Activated CD4-positive, alpha-beta memory T cell treated with anti-CD3 and anti-CD28 coated beads for 36 hours (primary cell): ENCODE measurements at regions of chr11 and their contacts with region 1.

Region 1: GRCh38 chr11:10933455-10934292 is 75.8 kb upstream of the ZBED5 start:
- DNase-seq: peak; percentile 89
- H3K4me3 Mint-ChIP-seq: peak overlapping the region; percentile 68
- H3K27ac Mint-ChIP-seq: no peak overlapping the region
- H3K4me1 Mint-ChIP-seq: peaks cover 15% of the 10 kb centered on the region
- H3K27me3 Mint-ChIP-seq: peaks cover 22% of the 10 kb centered on the region

Region 2: DNA sequence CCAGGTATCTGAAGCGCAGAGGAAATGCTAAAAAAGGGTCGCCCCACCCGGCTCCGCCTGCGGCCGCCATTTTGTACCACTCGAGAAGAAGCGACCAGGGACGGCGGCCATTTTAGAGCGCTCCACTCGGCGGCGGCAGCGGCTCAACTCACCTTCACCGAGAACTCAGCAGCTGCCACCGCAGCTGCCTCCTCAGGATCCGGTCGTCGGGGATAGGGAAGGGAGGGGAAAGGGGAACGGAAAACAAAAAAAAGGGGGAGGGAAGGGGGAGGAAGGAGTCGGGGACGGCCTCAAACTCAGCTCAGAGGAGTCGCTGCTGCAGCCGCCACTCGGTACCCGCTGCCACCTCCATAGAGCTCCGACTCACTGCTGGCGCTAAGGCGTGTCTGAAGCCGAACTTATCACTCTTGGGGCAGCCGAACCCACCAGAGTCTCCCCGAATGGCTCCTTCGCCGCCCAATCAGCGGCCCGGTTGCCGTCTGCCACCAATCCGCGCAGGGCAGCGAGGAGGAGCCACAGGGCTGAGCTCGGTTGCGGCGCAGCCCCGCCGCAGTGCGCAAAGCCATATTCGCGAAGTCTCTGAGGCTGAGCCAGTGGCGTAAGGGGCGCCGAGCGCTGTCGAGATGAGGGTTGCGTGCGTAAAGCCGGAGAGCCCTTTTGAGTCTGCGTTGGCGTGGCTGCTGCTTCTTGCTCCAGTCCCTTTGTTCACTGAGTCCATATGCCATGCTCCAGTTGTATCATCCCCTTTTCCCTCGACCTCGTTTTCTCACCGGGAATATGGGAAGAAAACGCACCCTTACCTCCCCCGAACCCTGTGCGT is 124.9 kb before region 1 on chr11 and contains the start of gene EIF4G2:
- CTCF ChIA-PET with region 1: interaction called, 5 read pairs
- POLR2A ChIA-PET with region 1: interaction called, 6 read pairs
- intact Hi-C with region 1: loop called (anchors 5 kb)
- DNase-seq: peak; percentile 99
- H3K4me3 Mint-ChIP-seq: peak within 1 kb of the TSS; percentile 91
- H3K27ac Mint-ChIP-seq: peak within 1 kb of the TSS; percentile 98
- H3K4me1 Mint-ChIP-seq: peaks cover 46% of the 10 kb centered on the region
- H3K27me3 Mint-ChIP-seq: no peaks in the 10 kb centered on the region
- total RNA-seq, gene EIF4G2: 794 to 835 TPM

Region 3: DNA sequence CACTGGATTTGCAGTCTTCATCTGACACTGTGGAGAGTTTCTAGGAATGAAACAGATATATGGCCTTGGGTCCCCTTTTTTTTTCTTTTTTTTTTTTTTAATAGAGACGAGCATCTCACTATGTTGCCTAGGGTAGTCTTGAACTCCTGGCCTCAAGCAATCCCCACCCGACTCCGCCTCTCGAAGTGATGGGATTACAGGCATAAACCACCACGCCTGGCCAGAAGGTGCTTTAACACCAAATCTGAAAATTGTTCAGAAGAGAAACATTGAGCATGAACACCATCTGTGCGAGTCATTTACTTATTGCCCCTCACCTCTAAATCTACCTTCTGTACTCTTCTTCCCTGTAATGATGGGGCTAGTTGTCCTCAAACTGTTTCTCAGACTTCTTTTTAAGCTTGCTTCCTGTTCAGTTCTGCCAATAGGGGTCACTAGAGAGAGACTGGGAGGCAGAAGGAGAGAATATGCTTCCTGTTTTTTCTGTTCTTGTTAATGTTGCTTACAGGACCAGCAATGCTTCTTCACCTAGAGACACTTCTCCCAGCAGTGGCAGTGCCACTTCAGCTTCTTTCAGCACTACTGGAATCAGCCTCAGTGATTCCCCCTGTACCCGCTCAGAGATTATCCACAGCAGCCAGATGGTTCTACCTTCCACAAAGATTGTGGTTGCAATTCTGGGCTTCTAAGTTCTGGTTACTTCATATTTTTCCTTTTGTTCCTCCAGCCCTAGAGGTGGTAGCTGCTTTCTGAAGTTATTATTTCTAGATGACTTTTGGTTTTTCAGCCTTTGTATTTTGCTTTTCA is 55.1 kb before region 1 on chr11:
- CTCF ChIA-PET with region 1: interaction called, 13 read pairs
- POLR2A ChIA-PET with region 1: no interaction called
- intact Hi-C with region 1: no loop called
- DNase-seq: no peak
- H3K4me3 Mint-ChIP-seq: no peak overlapping the region
- H3K27ac Mint-ChIP-seq: no peak overlapping the region
- H3K4me1 Mint-ChIP-seq: peaks cover 11% of the 10 kb centered on the region
- H3K27me3 Mint-ChIP-seq: no peaks in the 10 kb centered on the region

Region 4: GRCh38 chr11:11022125-11022730 is 88.6 kb after region 1 on chr11:
- CTCF ChIA-PET with region 1: interaction called, 49 read pairs
- POLR2A ChIA-PET with region 1: no interaction called
- intact Hi-C with region 1: loop called (anchors 1 kb)
- DNase-seq: no peak
- H3K4me3 Mint-ChIP-seq: no peak overlapping the region
- H3K27ac Mint-ChIP-seq: no peak overlapping the region
- H3K4me1 Mint-ChIP-seq: no peaks in the 10 kb centered on the region
- H3K27me3 Mint-ChIP-seq: no peaks in the 10 kb centered on the region

Region 5: GRCh38 chr11:11148104-11148509 is 214.4 kb after region 1 on chr11:
- CTCF ChIA-PET with region 1: interaction called, 3 read pairs
- POLR2A ChIA-PET with region 1: no interaction called
- intact Hi-C with region 1: loop called (anchors 5 kb)
- DNase-seq: peak; percentile 58
- H3K4me3 Mint-ChIP-seq: no peak overlapping the region
- H3K27ac Mint-ChIP-seq: no peak overlapping the region
- H3K4me1 Mint-ChIP-seq: peaks cover 37% of the 10 kb centered on the region
- H3K27me3 Mint-ChIP-seq: no peaks in the 10 kb centered on the region

Region 6: DNA sequence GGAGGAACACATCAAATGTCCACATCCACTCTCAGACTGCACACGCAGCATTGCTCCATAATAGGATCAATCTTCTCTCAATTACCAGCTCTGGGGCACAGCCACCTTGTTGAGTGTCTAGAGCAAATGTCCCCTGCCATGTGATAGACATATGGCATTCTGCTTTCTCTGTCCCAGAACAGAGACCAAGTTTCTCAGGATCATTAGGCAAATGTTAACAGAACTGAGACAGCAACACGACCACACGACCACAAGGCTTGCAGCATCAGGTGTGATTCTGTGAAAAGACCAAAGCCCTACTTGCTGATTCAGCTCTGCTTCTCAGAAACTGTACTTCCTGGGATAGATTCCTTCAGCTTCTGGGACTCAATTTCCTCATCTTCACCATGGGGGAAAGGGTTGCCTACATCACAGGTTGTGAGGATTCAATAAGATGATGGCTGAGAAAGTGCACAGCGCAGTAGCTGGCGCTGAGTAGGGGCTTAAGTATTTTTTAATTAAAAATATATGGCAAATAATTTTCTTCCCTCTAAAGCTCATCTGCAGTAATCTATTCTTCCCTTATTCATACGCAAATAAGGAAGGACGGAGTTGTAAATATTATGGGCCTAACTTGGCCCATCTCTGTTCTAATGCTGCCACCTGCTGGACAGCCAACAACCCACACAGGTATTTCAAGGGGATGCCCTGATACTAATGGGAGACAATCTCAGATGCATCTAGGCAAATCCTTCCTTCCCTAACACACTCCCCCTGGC is 853.8 kb after region 1 on chr11:
- CTCF ChIA-PET with region 1: interaction called, 8 read pairs
- POLR2A ChIA-PET with region 1: no interaction called
- intact Hi-C with region 1: loop called (anchors 1 kb)
- DNase-seq: peak; percentile 72
- H3K4me3 Mint-ChIP-seq: no peak overlapping the region
- H3K27ac Mint-ChIP-seq: no peak overlapping the region
- H3K4me1 Mint-ChIP-seq: no peaks in the 10 kb centered on the region
- H3K27me3 Mint-ChIP-seq: peaks cover 5% of the 10 kb centered on the region